ENCODE measurements at regions of chr5 and their contacts with region 1.

Region 1: DNA sequence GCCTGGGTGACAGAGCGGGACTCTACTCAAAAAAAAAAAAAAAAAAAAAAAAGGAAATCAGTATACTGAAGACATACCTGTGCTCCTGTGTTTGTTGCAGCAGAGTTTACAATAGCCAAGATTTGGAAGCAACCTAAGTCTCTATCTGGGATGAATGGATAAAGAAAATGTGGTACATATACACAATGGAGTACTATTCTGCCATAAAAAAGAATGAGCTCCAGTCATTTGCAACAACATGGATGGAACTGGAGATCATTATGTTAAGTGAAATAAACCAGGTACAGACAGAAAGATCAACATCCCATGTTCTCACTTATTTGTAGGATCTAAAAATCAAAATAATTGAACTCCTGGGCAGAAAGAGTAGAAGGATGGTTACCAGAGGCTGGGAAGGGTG is 22.9 kb downstream of the ADAM19 start:
- DNase-seq: no peak
- H3K4me3 ChIP-seq: no peak overlapping the region
- H3K27ac ChIP-seq: no peak overlapping the region
- H3K4me1 ChIP-seq: peaks cover 70% of the 10 kb centered on the region
- H3K27me3 ChIP-seq: no peaks in the 10 kb centered on the region
- CTCF ChIP-seq: no peak

Region 2: DNA sequence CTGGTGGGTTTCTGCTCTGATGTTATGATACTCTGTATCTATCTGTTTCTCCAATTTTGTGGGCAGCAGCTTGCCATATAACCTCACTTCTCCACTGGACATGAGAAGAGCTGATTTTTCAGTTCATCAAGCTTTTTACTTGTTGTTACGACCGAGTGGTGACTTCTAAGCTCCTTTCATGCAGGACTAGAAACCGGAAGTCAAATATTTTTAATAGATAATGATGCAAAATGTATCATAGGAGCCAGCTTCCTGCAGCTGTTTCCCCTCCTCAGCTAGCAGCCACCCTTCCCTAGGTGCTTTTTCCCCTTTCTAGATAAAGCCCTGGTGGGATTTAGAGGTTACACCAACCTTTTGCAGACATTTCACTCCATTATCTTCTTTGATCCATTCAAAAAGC is 39.9 kb after region 1 on chr5:
- CTCF ChIA-PET with region 1: interaction called, 15 read pairs
- POLR2A ChIA-PET with region 1: no interaction called
- intact Hi-C with region 1: no loop called
- DNase-seq: no peak
- H3K4me3 ChIP-seq: no peak overlapping the region
- H3K27ac ChIP-seq: no peak overlapping the region
- H3K4me1 ChIP-seq: no peaks in the 10 kb centered on the region
- H3K27me3 ChIP-seq: no peaks in the 10 kb centered on the region
- CTCF ChIP-seq: no peak